Activated CD4-positive, alpha-beta memory T cell treated with anti-CD3 and anti-CD28 coated beads for 36 hours (primary cell): ENCODE measurements at regions of chr13 and their contacts with region 1.

Region 1: DNA sequence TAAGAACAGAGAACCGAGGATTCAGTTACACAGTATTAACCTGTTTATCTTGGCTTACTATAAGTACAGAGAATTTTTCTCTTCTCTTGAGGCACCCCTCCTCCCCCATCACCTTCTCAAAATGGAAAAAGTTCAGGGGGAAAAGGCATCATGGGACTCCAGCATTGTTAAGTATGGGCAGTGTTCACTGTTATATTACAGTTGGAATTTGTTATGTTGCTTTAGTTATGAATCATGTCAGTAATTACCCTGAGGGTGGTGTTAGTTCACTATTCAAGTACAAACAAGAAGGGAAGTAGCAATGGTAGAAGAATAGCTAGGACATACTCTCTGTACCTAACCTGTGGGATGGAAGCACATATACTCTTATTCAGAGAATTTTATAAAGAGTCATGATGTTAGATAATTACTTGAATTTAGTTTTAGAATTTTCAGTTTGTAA is 12.0 kb downstream of the LPAR6 start:
- DNase-seq: no peak
- H3K4me3 Mint-ChIP-seq: no peak overlapping the region
- H3K27ac Mint-ChIP-seq: peak overlapping the region; percentile 11
- H3K4me1 Mint-ChIP-seq: peaks cover 66% of the 10 kb centered on the region
- H3K27me3 Mint-ChIP-seq: no peaks in the 10 kb centered on the region

Region 2: GRCh38 chr13:48037346-48038173 is 363.3 kb before region 1 on chr13 and contains the start of gene NUDT15:
- CTCF ChIA-PET with region 1: interaction called, 4 read pairs
- POLR2A ChIA-PET with region 1: no interaction called
- intact Hi-C with region 1: loop called (anchors 5 kb)
- DNase-seq: peak; percentile 97
- H3K4me3 Mint-ChIP-seq: peak within 1 kb of the TSS; percentile 96
- H3K27ac Mint-ChIP-seq: peak within 1 kb of the TSS; percentile 98
- H3K4me1 Mint-ChIP-seq: peaks cover 29% of the 10 kb centered on the region
- H3K27me3 Mint-ChIP-seq: no peaks in the 10 kb centered on the region
- total RNA-seq, gene NUDT15: 18.5 to 19.2 TPM

Region 3: DNA sequence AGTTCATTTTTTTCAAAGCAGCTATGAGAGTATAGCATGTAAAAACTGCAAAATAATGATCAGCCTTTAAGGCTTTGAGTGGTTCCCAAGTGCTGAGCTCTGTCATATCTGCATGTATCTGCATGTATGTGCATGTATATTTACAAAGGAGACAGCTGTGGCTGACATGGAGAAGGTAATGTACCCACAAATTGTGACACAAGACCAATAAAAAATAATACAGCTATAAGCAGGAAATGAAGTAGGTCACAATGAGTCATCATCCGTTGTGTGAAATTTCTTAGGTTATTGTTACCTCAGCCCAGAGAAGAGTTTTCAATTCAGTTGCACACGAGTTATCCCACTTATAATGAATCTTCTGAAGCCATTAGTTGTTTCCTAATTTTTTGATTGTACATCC is 245.0 kb before region 1 on chr13:
- CTCF ChIA-PET with region 1: no interaction called
- POLR2A ChIA-PET with region 1: no interaction called
- intact Hi-C with region 1: loop called (anchors 10 kb)
- DNase-seq: no peak
- H3K4me3 Mint-ChIP-seq: peak overlapping the region; percentile 64
- H3K27ac Mint-ChIP-seq: peak overlapping the region; percentile 95
- H3K4me1 Mint-ChIP-seq: peaks cover 84% of the 10 kb centered on the region
- H3K27me3 Mint-ChIP-seq: no peaks in the 10 kb centered on the region

Region 4: DNA sequence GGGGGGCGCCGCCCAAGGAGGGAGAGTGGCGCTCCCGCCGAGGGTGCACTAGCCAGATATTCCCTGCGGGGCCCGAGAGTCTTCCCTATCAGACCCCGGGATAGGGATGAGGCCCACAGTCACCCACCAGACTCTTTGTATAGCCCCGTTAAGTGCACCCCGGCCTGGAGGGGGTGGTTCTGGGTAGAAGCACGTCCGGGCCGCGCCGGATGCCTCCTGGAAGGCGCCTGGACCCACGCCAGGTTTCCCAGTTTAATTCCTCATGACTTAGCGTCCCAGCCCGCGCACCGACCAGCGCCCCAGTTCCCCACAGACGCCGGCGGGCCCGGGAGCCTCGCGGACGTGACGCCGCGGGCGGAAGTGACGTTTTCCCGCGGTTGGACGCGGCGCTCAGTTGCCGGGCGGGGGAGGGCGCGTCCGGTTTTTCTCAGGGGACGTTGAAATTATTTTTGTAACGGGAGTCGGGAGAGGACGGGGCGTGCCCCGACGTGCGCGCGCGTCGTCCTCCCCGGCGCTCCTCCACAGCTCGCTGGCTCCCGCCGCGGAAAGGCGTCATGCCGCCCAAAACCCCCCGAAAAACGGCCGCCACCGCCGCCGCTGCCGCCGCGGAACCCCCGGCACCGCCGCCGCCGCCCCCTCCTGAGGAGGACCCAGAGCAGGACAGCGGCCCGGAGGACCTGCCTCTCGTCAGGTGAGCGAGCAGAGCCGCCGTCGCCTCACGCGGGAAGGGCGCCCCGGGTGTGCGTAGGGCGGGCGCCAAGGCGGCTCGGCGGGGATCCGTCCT is 97.3 kb before region 1 on chr13 and contains the start of gene RB1:
- CTCF ChIA-PET with region 1: no interaction called
- POLR2A ChIA-PET with region 1: no interaction called
- intact Hi-C with region 1: loop called (anchors 2 kb)
- DNase-seq: peak; percentile 94
- H3K4me3 Mint-ChIP-seq: peak within 1 kb of the TSS; percentile 97
- H3K27ac Mint-ChIP-seq: peak within 1 kb of the TSS; percentile 93
- H3K4me1 Mint-ChIP-seq: peaks cover 27% of the 10 kb centered on the region
- H3K27me3 Mint-ChIP-seq: no peaks in the 10 kb centered on the region
- total RNA-seq, gene RB1: 26.5 to 28.8 TPM

Region 5: GRCh38 chr13:48492470-48493065 is 91.7 kb after region 1 on chr13:
- CTCF ChIA-PET with region 1: no interaction called
- POLR2A ChIA-PET with region 1: no interaction called
- intact Hi-C with region 1: loop called (anchors 1 kb)
- DNase-seq: peak; percentile 80
- H3K4me3 Mint-ChIP-seq: no peak overlapping the region
- H3K27ac Mint-ChIP-seq: no peak overlapping the region
- H3K4me1 Mint-ChIP-seq: peaks cover 41% of the 10 kb centered on the region
- H3K27me3 Mint-ChIP-seq: no peaks in the 10 kb centered on the region

Region 6: GRCh38 chr13:48532506-48533499 is 131.9 kb after region 1 on chr13 and contains the start of gene RCBTB2:
- CTCF ChIA-PET with region 1: no interaction called
- POLR2A ChIA-PET with region 1: interaction called, 3 read pairs
- intact Hi-C with region 1: loop called (anchors 2 kb)
- DNase-seq: peak; percentile 99
- H3K4me3 Mint-ChIP-seq: peak within 1 kb of the TSS; percentile 92
- H3K27ac Mint-ChIP-seq: peak within 1 kb of the TSS; percentile 99
- H3K4me1 Mint-ChIP-seq: peaks cover 28% of the 10 kb centered on the region
- H3K27me3 Mint-ChIP-seq: no peaks in the 10 kb centered on the region
- total RNA-seq, gene RCBTB2: 1.5 to 1.8 TPM

Region 7: DNA sequence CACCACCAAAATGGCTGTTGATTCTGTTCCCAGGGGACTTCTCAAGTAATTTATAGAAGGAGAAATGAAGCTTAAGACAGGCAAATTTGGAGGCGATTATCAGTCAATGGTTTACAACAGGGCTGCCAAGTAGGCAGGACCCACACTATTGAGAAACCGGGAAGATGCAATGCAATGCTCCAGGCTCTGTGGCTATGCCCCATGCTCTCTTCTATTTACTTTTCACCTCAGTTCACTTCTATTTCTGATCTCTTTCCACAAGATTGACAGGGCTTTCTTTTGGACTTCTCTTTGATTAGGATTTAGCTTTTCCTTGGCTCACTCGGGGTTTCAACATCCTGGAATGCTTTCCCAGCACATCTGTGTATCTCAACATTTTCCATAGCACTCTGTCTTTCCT is 144.7 kb after region 1 on chr13:
- CTCF ChIA-PET with region 1: no interaction called
- POLR2A ChIA-PET with region 1: no interaction called
- intact Hi-C with region 1: no loop called
- DNase-seq: no peak
- H3K4me3 Mint-ChIP-seq: no peak overlapping the region
- H3K27ac Mint-ChIP-seq: no peak overlapping the region
- H3K4me1 Mint-ChIP-seq: no peaks in the 10 kb centered on the region
- H3K27me3 Mint-ChIP-seq: peaks cover 3% of the 10 kb centered on the region

Region 8: GRCh38 chr13:48580185-48580803 is 179.4 kb after region 1 on chr13:
- CTCF ChIA-PET with region 1: interaction called, 6 read pairs
- POLR2A ChIA-PET with region 1: no interaction called
- intact Hi-C with region 1: loop called (anchors 5 kb)
- DNase-seq: peak; percentile 75
- H3K4me3 Mint-ChIP-seq: no peak overlapping the region
- H3K27ac Mint-ChIP-seq: no peak overlapping the region
- H3K4me1 Mint-ChIP-seq: peaks cover 4% of the 10 kb centered on the region
- H3K27me3 Mint-ChIP-seq: peaks cover 7% of the 10 kb centered on the region

Region 9: GRCh38 chr13:48930918-48931317 is 530.0 kb after region 1 on chr13:
- CTCF ChIA-PET with region 1: no interaction called
- POLR2A ChIA-PET with region 1: no interaction called
- intact Hi-C with region 1: no loop called
- DNase-seq: no peak
- H3K4me3 Mint-ChIP-seq: no peak overlapping the region
- H3K27ac Mint-ChIP-seq: no peak overlapping the region
- H3K4me1 Mint-ChIP-seq: peaks cover 3% of the 10 kb centered on the region
- H3K27me3 Mint-ChIP-seq: peaks cover 3% of the 10 kb centered on the region